Heart left ventricle (tissue), 16 donors: ENCODE measurements at regions of chr16 and their contacts with region 1.

Region 1: DNA sequence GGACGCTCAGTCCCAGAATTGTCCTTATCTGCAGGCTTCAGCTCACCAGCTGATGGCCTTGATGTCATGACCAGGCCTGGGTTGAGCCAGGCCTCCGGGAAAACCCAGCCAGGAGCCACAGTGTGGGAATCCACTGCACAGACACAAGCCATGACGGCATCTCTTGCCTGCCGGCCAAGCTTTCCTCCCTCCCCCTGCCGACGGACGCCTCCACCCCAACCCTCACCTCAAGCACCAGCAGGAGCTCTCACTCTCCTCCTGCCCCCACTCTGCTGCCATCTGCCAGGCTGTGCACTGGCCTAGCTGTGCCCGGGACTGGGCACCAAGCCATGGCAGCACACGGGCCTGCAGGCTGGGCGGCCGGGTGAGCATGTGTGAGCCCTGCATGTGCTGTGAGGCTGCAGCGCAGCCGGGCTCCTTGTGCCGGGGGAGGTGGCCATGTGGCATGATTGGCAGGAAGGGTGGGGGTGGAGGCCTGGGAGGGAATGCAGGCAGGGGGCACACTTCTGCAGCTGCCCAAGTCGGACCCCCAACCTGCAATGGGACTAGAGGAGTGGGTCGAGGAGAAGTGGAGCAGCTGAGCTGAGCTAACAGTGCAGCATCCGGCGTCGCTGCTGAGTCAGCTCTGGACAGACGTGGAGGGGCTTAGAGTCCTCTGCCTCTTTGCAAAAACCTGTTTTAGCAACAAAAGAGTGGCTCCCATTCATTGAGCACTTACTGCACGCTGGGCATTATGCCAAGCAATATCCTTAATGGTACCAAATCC is 268.5 kb downstream of the CBLN1 start:
- DNase-seq: peak; percentile 72 to 90 (median 80)
- ATAC-seq: peak; percentile 88 to 95 (median 94)
- H3K4me3 ChIP-seq: no peak overlapping the region
- H3K27ac ChIP-seq: peak overlapping the region in 6 of 12 donors; percentile 20 to 68 (median 43)
- H3K4me1 ChIP-seq: peaks cover 0 to 21% (median 5%) of the 10 kb centered on the region in 12 donors
- H3K27me3 ChIP-seq: no peaks in the 10 kb centered on the region
- CTCF ChIP-seq: no peak
- POLR2A ChIP-seq: no peak

Region 2: GRCh38 chr16:48997081-48997615 is 16.0 kb before region 1 on chr16:
- intact Hi-C with region 1: loop called in 1 of 10 experiments (anchors 1 kb)
- DNase-seq: no peak
- ATAC-seq: no peak
- H3K4me3 ChIP-seq: no peak overlapping the region
- H3K27ac ChIP-seq: peak overlapping the region in 1 of 12 donors; percentile 77
- H3K4me1 ChIP-seq: peaks cover 0 to 5% (median 0%) of the 10 kb centered on the region in 12 donors
- H3K27me3 ChIP-seq: no peaks in the 10 kb centered on the region
- CTCF ChIP-seq: no peak
- POLR2A ChIP-seq: no peak

Region 3: DNA sequence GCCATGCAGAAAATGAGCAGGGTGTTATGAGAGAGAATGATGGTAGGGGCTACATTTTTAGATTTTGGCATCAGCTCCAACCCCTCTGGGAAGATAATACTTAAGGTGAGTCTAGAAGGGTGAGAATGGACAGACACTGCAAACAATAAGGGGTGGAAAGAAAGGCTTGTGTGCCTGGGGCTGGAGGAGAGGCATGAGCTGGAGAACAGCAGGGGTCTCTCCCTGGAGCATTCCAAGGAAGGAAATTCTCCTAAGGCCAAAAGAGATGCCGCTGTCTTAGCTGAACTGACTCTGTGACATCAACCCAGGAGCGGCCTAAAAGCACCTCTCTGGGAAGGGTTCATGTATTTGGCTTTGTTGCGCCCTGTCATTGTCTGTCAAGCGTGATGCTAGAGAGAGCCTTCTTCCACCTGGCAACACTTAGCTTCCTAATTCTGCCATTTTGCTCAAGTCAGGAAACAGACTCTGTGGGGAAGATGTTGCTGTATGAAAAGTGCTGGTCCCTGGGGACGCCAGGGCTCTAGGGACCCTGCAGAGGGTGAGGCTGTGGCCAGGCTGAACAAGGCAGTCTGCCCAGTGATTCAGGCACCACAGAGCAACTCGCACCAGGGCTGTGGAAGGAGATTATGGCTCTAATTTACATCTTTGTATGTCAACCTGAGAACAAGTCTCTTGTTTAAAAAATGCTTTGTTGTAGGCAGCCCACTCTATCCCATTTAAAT is 42.8 kb after region 1 on chr16:
- intact Hi-C with region 1: loop called in 1 of 10 experiments (anchors 5 kb)
- DNase-seq: no peak
- ATAC-seq: no peak
- H3K4me3 ChIP-seq: no peak overlapping the region
- H3K27ac ChIP-seq: no peak overlapping the region
- H3K4me1 ChIP-seq: peaks cover 0 to 8% (median 0%) of the 10 kb centered on the region in 12 donors
- H3K27me3 ChIP-seq: no peaks in the 10 kb centered on the region
- CTCF ChIP-seq: no peak
- POLR2A ChIP-seq: no peak

Region 4: DNA sequence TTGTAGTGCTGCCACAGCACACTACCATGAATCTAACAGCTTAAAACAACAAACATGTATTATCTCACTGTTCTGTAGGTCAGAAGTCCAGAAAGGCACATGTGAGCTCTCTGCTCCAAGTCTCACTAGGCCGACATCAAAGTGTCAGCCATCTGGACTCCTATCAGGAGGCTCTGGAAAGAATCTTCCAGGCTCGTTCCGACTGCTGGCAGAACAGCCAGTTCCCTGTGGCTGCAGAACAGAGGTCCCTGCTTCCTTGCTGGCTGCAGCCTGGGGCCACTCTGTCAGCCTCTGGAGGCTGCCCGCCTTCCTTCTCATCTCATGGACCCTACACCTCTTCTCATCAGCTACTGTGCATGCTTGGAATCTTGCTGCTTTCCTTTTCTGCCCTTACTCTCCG is 99.6 kb after region 1 on chr16:
- intact Hi-C with region 1: loop called in 1 of 10 experiments (anchors 5 kb)
- DNase-seq: peak; percentile 41 to 85 (median 67)
- ATAC-seq: peak; percentile 97 to 99 (median 97)
- H3K4me3 ChIP-seq: no peak overlapping the region
- H3K27ac ChIP-seq: peak overlapping the region in 8 of 12 donors; percentile 31 to 69 (median 62)
- H3K4me1 ChIP-seq: peaks cover 0 to 25% (median 5%) of the 10 kb centered on the region in 12 donors
- H3K27me3 ChIP-seq: no peaks in the 10 kb centered on the region
- CTCF ChIP-seq: no peak
- POLR2A ChIP-seq: no peak

Region 5: GRCh38 chr16:49407873-49408550 is 394.9 kb after region 1 on chr16:
- intact Hi-C with region 1: no loop called
- DNase-seq: peak; percentile 81 to 90 (median 87)
- ATAC-seq: peak; percentile 95 to 99 (median 98)
- H3K4me3 ChIP-seq: no peak overlapping the region
- H3K27ac ChIP-seq: no peak overlapping the region
- H3K4me1 ChIP-seq: peaks cover 0 to 7% (median 0%) of the 10 kb centered on the region in 12 donors
- H3K27me3 ChIP-seq: no peaks in the 10 kb centered on the region
- CTCF ChIP-seq: peak; percentile 85 to 94 (median 91)
- POLR2A ChIP-seq: no peak